ENCODE measurements at regions of chr15 and their contacts with region 1.

Region 1: GRCh38 chr15:77024271-77025082 is 29.6 kb downstream of the PSTPIP1 start:
- DNase-seq: peak; percentile 66
- H3K4me3 Mint-ChIP-seq: no peak overlapping the region
- H3K27ac Mint-ChIP-seq: peak overlapping the region; percentile 70
- H3K4me1 Mint-ChIP-seq: peaks cover 57% of the 10 kb centered on the region
- H3K27me3 Mint-ChIP-seq: no peaks in the 10 kb centered on the region

Region 2: GRCh38 chr15:76912141-76912834 is 112.2 kb before region 1 on chr15:
- CTCF ChIA-PET with region 1: no interaction called
- POLR2A ChIA-PET with region 1: no interaction called
- DNase-seq: no peak
- H3K4me3 Mint-ChIP-seq: no peak overlapping the region
- H3K27ac Mint-ChIP-seq: no peak overlapping the region
- H3K4me1 Mint-ChIP-seq: peaks cover 5% of the 10 kb centered on the region
- H3K27me3 Mint-ChIP-seq: peaks cover 7% of the 10 kb centered on the region

Region 3: DNA sequence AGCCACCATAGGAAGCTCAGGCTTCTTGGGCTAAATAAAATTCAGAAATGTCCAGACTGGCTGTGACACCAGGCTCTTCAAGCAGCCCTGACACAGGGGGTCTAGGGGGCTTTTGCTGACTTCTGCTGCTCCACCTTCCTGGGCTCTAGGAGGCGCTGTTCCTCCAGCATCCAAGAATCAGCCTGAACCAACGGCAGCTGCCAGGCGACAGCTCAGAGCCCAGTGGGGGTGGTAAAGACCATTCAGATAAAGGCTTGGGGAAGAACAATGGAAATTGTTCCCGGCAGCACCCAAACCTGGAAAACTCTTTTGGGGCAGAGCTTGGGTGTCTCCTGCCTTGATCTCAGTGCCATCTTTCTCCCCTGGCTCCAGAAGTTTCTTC is 51.1 kb before region 1 on chr15:
- CTCF ChIA-PET with region 1: interaction called, 33 read pairs
- POLR2A ChIA-PET with region 1: interaction called, 4 read pairs
- DNase-seq: peak; percentile 71
- H3K4me3 Mint-ChIP-seq: no peak overlapping the region
- H3K27ac Mint-ChIP-seq: no peak overlapping the region
- H3K4me1 Mint-ChIP-seq: peaks cover 25% of the 10 kb centered on the region
- H3K27me3 Mint-ChIP-seq: peaks cover 1% of the 10 kb centered on the region

Region 4: DNA sequence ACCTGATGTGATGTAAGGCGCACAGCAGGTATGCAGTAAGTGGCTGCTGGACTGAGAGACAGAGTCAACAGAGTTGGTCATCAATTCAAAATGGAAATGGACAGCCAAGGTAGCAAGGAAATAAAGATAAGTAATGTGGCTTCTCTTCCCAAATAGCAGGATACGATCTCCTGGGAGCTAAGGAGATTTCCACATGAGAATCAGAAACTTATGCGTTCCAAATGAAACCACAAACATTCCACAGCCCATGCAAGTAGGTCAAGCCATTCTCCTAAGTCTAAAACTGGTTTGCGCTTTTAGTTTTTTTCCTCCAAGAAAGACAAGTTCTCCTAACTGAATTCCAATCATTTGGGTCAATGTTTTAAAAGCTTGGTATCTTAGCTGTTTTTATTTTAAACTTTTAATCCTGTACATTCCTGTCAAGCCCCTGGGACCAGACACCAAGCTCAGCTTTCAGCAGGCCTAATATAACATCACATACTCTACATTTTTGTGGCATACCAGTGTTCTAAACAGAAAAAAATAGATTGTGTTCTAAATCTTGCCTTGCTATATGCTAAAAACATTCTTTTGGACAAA is 120.1 kb after region 1 on chr15:
- CTCF ChIA-PET with region 1: no interaction called
- POLR2A ChIA-PET with region 1: no interaction called
- DNase-seq: no peak
- H3K4me3 Mint-ChIP-seq: no peak overlapping the region
- H3K27ac Mint-ChIP-seq: no peak overlapping the region
- H3K4me1 Mint-ChIP-seq: peaks cover 5% of the 10 kb centered on the region
- H3K27me3 Mint-ChIP-seq: no peaks in the 10 kb centered on the region

Measured in activated CD4-positive, alpha-beta memory T cell treated with anti-CD3 and anti-CD28 coated beads, Interleukin-2, amount 10 ng/mL, durations not matched to agents 7 days and 5 days (primary cell).